Aorta (tissue), 5 donors: ENCODE measurements at regions of chr3 and their contacts with region 1.

Region 1: GRCh38 chr3:188617988-188618701 is 464.2 kb downstream of the LPP start:
- DNase-seq: no peak
- ATAC-seq: no peak
- H3K4me3 ChIP-seq: no peak overlapping the region
- H3K27ac ChIP-seq: no peak overlapping the region
- H3K4me1 ChIP-seq: peaks cover 0 to 7% of the 10 kb centered on the region in 2 donors
- H3K27me3 ChIP-seq: no peaks in the 10 kb centered on the region

Region 2: GRCh38 chr3:188683032-188683521 is 64.9 kb after region 1 on chr3:
- intact Hi-C with region 1: loop called in 1 of 2 experiments (anchors 5 kb)
- DNase-seq: peak in 1 of 2 donors; percentile 69
- ATAC-seq: peak; percentile 76
- H3K4me3 ChIP-seq: no peak overlapping the region
- H3K27ac ChIP-seq: peak overlapping the region in 1 of 2 donors; percentile 32
- H3K4me1 ChIP-seq: peaks cover 13 to 34% of the 10 kb centered on the region in 2 donors
- H3K27me3 ChIP-seq: no peaks in the 10 kb centered on the region